Breast epithelium (tissue), 4 donors: ENCODE measurements at regions of chr18 and their contacts with region 1.

Region 1: DNA sequence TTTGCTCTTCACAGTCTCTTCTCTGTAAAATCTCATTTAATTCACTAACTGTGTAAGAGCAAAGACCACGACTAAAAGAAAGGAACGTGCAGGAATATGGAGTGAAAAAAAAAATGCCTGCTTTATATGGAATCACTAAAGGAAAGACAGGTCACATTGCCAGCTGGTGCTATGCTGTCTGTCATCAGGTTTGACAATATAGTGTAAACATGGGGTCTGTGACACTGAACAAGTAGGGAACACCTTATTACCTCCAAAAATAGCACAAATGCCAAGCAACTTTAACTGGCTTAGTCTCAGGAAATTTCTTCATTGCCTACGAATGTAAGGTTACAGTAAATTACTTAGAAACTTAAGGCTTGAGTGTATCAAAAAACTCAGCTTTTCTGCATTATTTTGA is 364.5 kb upstream of the LINC00305 start:
- DNase-seq: no peak
- H3K4me3 ChIP-seq: no peak overlapping the region
- H3K27ac ChIP-seq: no peak overlapping the region
- H3K4me1 ChIP-seq: no peaks in the 10 kb centered on the region
- H3K27me3 ChIP-seq: no peaks in the 10 kb centered on the region
- CTCF ChIP-seq: no peak
- POLR2A ChIP-seq: no peak

Region 2: DNA sequence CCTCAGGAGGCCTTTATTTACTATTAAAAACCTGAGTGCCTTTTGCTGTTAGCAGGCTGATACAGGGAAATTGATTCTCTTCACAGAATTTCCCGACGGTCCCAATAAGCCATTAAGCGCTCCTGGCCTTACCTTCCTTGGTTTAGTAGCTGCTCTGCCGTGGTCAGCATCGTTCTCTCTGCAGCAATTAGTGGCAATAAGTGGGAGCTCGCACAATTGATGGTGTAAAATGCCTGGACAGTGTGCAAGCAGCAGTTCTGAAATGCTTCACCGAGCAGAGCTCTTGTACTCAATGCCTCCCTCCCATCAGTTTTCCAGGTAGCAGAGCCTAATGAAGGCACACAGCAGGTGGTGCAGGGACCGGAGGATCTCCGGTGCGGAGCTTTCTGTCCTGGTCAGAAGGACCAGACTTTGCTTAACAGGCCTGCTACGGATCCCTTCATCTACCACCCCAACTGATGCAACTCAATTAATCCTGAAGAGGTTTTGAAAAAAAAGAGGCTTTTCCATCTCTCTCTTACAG is 363.4 kb before region 1 on chr18:
- intact Hi-C with region 1: loop called (anchors 5 kb)
- DNase-seq: no peak
- H3K4me3 ChIP-seq: no peak overlapping the region
- H3K27ac ChIP-seq: no peak overlapping the region
- H3K4me1 ChIP-seq: no peaks in the 10 kb centered on the region
- H3K27me3 ChIP-seq: no peaks in the 10 kb centered on the region
- CTCF ChIP-seq: no peak
- POLR2A ChIP-seq: no peak

Region 3: GRCh38 chr18:64851726-64852125 is 338.3 kb after region 1 on chr18:
- intact Hi-C with region 1: loop called (anchors 10 kb)
- DNase-seq: no peak
- H3K4me3 ChIP-seq: no peak overlapping the region
- H3K27ac ChIP-seq: no peak overlapping the region
- H3K4me1 ChIP-seq: no peaks in the 10 kb centered on the region
- H3K27me3 ChIP-seq: no peaks in the 10 kb centered on the region
- CTCF ChIP-seq: no peak
- POLR2A ChIP-seq: no peak